ENCODE measurements at regions of chr11 and their contacts with region 1.

Region 1: DNA sequence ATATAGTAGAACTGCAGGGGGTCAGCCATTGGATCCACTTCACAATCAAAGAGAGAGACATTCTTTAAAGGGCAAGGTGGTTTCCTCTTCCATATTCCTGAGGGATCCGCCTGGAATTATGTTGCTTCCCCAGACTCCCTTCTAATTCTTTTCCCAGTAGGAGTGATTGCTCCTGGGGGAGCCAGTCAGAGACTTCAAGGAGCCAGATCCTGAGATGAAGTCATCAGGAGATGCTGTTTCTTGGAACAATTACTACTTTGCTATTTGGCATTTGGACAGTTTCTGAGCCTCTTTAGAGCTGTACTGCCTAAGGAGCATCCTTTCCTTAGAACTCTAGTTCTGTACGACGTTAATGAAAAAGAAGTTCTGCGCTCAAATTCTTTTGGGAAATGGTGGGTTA is 1.9 kb upstream of the OR9Q2 start:
- DNase-seq: no peak
- ATAC-seq: no peak
- H3K4me3 ChIP-seq: no peak overlapping the region
- H3K27ac ChIP-seq: no peak overlapping the region
- H3K4me1 ChIP-seq: no peaks in the 10 kb centered on the region
- H3K27me3 ChIP-seq: peaks cover 7% of the 10 kb centered on the region; the same call in 1 of the 2 replicates
- CTCF ChIP-seq: no peak
- POLR2A ChIP-seq: no peak
- RAD21 ChIP-seq: no peak

Region 2: DNA sequence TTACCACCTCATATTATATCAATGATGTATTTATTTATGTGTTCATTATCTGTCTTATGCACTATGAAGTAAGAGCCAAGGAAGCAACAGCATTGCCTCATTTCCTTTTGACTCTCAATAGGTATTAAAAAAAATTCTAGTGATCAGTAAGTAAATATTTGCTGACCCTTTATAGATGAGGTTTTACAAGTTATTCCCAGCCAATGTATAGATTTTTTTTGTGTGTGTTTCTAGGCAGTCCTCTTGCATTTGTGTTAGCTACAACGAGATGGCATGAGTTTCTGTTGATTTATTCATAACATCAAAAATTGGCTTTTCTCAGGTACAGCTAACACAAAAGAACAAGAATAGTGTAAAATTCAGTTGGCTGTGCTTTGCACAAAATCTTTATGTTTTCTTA is 12.3 kb after region 1 on chr11:
- CTCF ChIA-PET with region 1: no interaction called
- POLR2A ChIA-PET with region 1: no interaction called
- RAD21 ChIA-PET with region 1: no interaction called
- intact Hi-C with region 1: no loop called
- DNase-seq: no peak
- ATAC-seq: no peak
- H3K4me3 ChIP-seq: no peak overlapping the region
- H3K27ac ChIP-seq: no peak overlapping the region
- H3K4me1 ChIP-seq: no peaks in the 10 kb centered on the region
- H3K27me3 ChIP-seq: no peaks in the 10 kb centered on the region
- CTCF ChIP-seq: no peak
- POLR2A ChIP-seq: no peak
- RAD21 ChIP-seq: no peak

Region 3: GRCh38 chr11:58276151-58276550 is 89.2 kb after region 1 on chr11:
- CTCF ChIA-PET with region 1: no interaction called
- POLR2A ChIA-PET with region 1: no interaction called
- RAD21 ChIA-PET with region 1: no interaction called
- intact Hi-C with region 1: no loop called
- DNase-seq: no peak
- ATAC-seq: no peak
- H3K4me3 ChIP-seq: no peak overlapping the region
- H3K27ac ChIP-seq: no peak overlapping the region
- H3K4me1 ChIP-seq: no peaks in the 10 kb centered on the region
- H3K27me3 ChIP-seq: no peaks in the 10 kb centered on the region
- CTCF ChIP-seq: no peak
- POLR2A ChIP-seq: no peak
- RAD21 ChIP-seq: no peak

Region 4: DNA sequence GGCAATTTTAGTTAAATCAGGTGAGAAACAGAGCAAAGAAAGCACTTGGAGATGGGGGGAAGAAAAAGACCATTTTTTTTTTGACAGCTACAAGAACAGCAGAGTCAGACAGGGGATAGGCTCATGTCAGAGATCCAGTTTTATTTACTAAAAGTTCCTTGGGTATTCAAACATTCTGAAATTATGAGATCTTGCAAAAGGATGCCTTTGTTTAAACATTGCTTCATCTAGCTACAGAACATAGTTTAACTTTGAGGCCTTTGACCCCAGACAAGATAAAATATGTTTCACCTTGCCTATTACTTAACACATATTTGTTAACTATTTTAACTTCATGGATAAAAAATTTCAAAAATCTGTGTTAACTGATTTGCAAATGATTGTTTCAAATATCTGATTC is 758.7 kb after region 1 on chr11:
- CTCF ChIA-PET with region 1: no interaction called
- POLR2A ChIA-PET with region 1: no interaction called
- RAD21 ChIA-PET with region 1: no interaction called
- intact Hi-C with region 1: loop called (anchors 2 kb)
- DNase-seq: no peak
- ATAC-seq: no peak
- H3K4me3 ChIP-seq: no peak overlapping the region
- H3K27ac ChIP-seq: no peak overlapping the region
- H3K4me1 ChIP-seq: no peaks in the 10 kb centered on the region
- H3K27me3 ChIP-seq: no peaks in the 10 kb centered on the region
- CTCF ChIP-seq: no peak
- POLR2A ChIP-seq: no peak
- RAD21 ChIP-seq: no peak